ENCODE measurements at regions of chr6 and their contacts with region 1.

Region 1: GRCh38 chr6:144582939-144583613 is 297.9 kb downstream of the UTRN start:
- DNase-seq: peak; percentile 35
- H3K4me3 ChIP-seq: peak overlapping the region; percentile 11
- H3K27ac ChIP-seq: no peak overlapping the region
- H3K4me1 ChIP-seq: no peaks in the 10 kb centered on the region
- H3K27me3 ChIP-seq: no peaks in the 10 kb centered on the region
- CTCF ChIP-seq: no peak

Region 2: GRCh38 chr6:144778773-144779492 is 195.9 kb after region 1 on chr6:
- intact Hi-C with region 1: loop called (anchors 10 kb)
- DNase-seq: no peak
- H3K4me3 ChIP-seq: no peak overlapping the region
- H3K27ac ChIP-seq: no peak overlapping the region
- H3K4me1 ChIP-seq: no peaks in the 10 kb centered on the region
- H3K27me3 ChIP-seq: no peaks in the 10 kb centered on the region
- CTCF ChIP-seq: no peak

Region 3: GRCh38 chr6:144931172-144932035 is 348.3 kb after region 1 on chr6:
- intact Hi-C with region 1: loop called (anchors 5 kb)
- DNase-seq: peak; percentile 52
- H3K4me3 ChIP-seq: no peak overlapping the region
- H3K27ac ChIP-seq: no peak overlapping the region
- H3K4me1 ChIP-seq: no peaks in the 10 kb centered on the region
- H3K27me3 ChIP-seq: no peaks in the 10 kb centered on the region
- CTCF ChIP-seq: no peak

Region 4: GRCh38 chr6:145028144-145028818 is 445.2 kb after region 1 on chr6:
- intact Hi-C with region 1: loop called (anchors 5 kb)
- DNase-seq: peak; percentile 39
- H3K4me3 ChIP-seq: no peak overlapping the region
- H3K27ac ChIP-seq: no peak overlapping the region
- H3K4me1 ChIP-seq: no peaks in the 10 kb centered on the region
- H3K27me3 ChIP-seq: no peaks in the 10 kb centered on the region
- CTCF ChIP-seq: peak; percentile 23

Region 5: GRCh38 chr6:145214570-145214969 is 631.5 kb after region 1 on chr6:
- intact Hi-C with region 1: loop called (anchors 10 kb)
- DNase-seq: no peak
- H3K4me3 ChIP-seq: no peak overlapping the region
- H3K27ac ChIP-seq: no peak overlapping the region
- H3K4me1 ChIP-seq: no peaks in the 10 kb centered on the region
- H3K27me3 ChIP-seq: no peaks in the 10 kb centered on the region
- CTCF ChIP-seq: peak; percentile 59

Region 6: GRCh38 chr6:145633981-145634627 is 1051.0 kb after region 1 on chr6:
- intact Hi-C with region 1: loop called (anchors 10 kb)
- DNase-seq: peak; percentile 91
- H3K4me3 ChIP-seq: no peak overlapping the region
- H3K27ac ChIP-seq: no peak overlapping the region
- H3K4me1 ChIP-seq: no peaks in the 10 kb centered on the region
- H3K27me3 ChIP-seq: no peaks in the 10 kb centered on the region
- CTCF ChIP-seq: peak; percentile 77